ENCODE measurements at regions of chr1 and their contacts with region 1.

Region 1: DNA sequence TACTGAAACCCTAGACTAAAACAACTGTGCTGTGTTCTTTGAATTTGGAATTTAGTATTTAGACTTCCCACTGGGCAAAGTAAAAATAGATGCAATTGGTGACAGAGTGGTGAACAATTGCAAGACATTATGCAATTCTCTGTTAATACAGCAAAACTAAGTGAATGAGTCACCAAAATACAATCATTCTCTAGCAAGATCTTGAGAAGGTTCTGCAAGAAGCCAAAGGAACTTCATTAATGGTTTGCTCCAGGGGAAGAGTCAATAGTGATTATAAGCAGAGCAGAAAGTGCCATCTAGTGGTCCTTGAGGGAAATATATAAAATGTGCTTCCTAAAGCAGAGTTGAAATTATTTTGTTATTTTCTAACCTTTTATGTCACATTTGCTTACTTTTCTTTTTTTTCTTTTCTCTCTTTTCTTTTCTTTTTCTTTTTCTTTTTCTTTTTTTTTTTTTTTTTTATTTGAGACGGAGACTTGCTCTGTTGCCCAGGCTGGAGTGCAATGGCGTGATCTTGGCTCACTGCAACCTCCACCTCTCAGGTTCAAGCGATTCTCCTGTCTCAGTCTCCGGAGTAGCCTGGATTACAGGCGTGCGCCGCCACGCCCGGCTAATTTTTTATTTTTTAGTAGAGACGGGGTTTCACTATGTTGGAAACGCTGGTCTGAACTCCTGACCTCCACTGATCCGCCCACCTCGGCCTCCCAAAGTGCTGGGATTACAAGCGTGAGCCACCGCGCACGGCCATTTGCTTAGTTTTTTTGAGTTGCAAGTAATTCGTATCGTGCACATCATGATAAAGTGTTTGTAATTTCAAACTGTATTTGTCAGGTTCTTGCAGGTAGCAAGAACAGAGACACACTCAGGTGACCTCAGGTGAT is 99.2 kb downstream of the CTH start:
- DNase-seq: peak in 2 of 4 donors; percentile 13 to 14
- ATAC-seq: peak; percentile 74
- H3K4me3 ChIP-seq: no peak overlapping the region
- H3K27ac ChIP-seq: no peak overlapping the region
- H3K4me1 ChIP-seq: no peaks in the 10 kb centered on the region
- H3K27me3 ChIP-seq: no peaks in the 10 kb centered on the region
- CTCF ChIP-seq: peak; percentile 42 to 88 (median 82)
- POLR2A ChIP-seq: no peak

Region 2: GRCh38 chr1:70134148-70134547 is 376.1 kb before region 1 on chr1:
- intact Hi-C with region 1: loop called (anchors 10 kb)
- DNase-seq: no peak
- ATAC-seq: no peak
- H3K4me3 ChIP-seq: no peak overlapping the region
- H3K27ac ChIP-seq: no peak overlapping the region
- H3K4me1 ChIP-seq: peaks cover 6% of the 10 kb centered on the region
- H3K27me3 ChIP-seq: no peaks in the 10 kb centered on the region
- CTCF ChIP-seq: no peak
- POLR2A ChIP-seq: no peak

Region 3: GRCh38 chr1:70567167-70567566 is 56.9 kb after region 1 on chr1:
- intact Hi-C with region 1: no loop called
- DNase-seq: no peak
- ATAC-seq: no peak
- H3K4me3 ChIP-seq: no peak overlapping the region
- H3K27ac ChIP-seq: no peak overlapping the region
- H3K4me1 ChIP-seq: no peaks in the 10 kb centered on the region
- H3K27me3 ChIP-seq: no peaks in the 10 kb centered on the region
- CTCF ChIP-seq: no peak
- POLR2A ChIP-seq: no peak

Region 4: DNA sequence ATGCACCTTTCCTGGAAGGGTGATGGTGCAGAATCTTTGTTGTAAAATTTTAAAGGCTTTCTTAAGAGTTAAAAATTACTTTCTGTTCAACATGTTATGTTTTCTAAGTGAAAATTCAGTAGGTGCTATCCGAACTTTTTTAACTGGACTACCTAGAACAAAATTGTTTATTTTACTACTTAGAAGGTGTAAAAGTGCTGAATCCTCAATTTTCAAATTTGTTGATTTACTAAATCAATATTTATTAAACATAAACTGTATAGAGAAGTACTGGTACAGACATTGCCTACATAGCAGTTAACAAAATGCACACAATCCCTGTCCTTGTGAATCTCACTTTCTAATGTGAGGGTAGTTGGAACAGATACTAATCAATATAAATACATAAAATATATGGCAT is 178.3 kb after region 1 on chr1:
- intact Hi-C with region 1: no loop called
- DNase-seq: no peak
- ATAC-seq: no peak
- H3K4me3 ChIP-seq: no peak overlapping the region
- H3K27ac ChIP-seq: no peak overlapping the region
- H3K4me1 ChIP-seq: no peaks in the 10 kb centered on the region
- H3K27me3 ChIP-seq: no peaks in the 10 kb centered on the region
- CTCF ChIP-seq: no peak
- POLR2A ChIP-seq: no peak

Measured in body of pancreas (tissue), 4 donors.